Left ventricle myocardium inferior (tissue), 1 donor: ENCODE measurements at regions of chr21 and their contacts with region 1.

Region 1: DNA sequence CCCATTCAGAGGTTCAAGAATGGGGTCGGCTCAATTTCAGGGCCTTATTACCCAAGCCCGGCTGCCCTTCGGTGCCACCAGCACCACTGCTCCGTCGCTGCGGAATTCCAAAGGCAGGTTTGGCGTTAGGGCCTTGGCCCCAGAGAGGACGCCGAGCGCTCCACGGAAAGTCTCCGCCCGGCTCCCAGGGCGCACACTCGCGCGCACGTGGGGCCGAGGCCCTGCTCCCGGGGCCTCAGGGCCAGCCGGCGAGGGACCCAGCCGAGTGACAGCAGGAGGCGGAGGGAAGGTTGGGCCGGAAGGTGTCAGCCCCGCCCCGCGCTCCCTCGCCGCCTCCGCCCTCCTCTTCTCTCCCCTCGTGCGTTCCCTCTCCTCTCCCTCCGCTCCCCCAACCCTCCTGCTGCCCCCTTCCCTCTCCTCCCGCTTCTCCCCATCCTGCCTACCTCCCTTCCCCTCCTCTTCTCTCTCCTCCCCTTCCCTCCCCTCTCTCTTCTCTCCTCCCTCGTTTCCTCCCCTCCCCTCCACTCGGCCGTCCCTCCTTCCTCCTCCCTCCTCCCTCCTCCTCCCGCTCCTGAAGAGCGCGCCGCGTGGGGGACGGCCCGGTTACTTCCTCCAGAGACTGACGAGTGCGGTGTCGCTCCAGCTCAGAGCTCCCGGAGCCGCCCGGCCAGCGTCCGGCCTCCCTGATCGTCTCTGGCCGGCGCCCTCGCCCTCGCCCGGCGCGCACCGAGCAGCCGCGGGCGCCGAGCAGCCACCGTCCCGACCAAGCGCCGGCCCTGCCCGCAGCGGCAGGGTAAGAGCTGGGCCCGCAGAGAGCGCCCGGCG is at the start of gene ETS2:
- DNase-seq: peak; percentile 90
- H3K4me3 ChIP-seq: peak within 1 kb of the TSS; percentile 93
- H3K27ac ChIP-seq: peak within 1 kb of the TSS; percentile 94
- H3K4me1 ChIP-seq: peaks cover 54% of the 10 kb centered on the region
- H3K27me3 ChIP-seq: no peaks in the 10 kb centered on the region
- CTCF ChIP-seq: peak; percentile 11
- total RNA-seq, gene ETS2: 40.9 TPM

Region 2: DNA sequence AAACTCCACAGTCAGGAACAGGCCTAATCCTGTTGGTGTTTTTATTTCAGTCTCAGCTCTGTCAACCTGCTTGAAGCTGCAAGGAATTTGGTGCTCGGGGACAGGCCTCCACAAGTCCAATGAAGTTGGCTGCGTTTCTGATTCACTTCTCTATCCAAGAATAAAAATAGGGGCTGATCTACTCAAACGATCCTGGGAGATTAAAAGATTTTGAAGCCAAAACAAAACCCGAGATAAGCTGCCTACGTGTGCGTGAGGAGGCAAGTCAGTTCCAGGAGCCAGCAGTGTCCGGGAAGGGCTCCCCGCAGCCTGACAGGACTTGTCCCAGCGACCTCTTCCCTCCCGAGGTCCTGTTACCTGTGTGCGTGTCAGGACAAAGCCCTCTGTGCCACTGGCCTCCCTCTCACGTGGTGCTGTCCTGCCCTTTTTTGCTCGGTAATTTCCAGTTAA is 98.2 kb after region 1 on chr21:
- intact Hi-C with region 1: loop called (anchors 10 kb)
- DNase-seq: no peak
- H3K4me3 ChIP-seq: no peak overlapping the region
- H3K27ac ChIP-seq: peak overlapping the region; percentile 71
- H3K4me1 ChIP-seq: peaks cover 39% of the 10 kb centered on the region
- H3K27me3 ChIP-seq: no peaks in the 10 kb centered on the region
- CTCF ChIP-seq: no peak

Region 3: DNA sequence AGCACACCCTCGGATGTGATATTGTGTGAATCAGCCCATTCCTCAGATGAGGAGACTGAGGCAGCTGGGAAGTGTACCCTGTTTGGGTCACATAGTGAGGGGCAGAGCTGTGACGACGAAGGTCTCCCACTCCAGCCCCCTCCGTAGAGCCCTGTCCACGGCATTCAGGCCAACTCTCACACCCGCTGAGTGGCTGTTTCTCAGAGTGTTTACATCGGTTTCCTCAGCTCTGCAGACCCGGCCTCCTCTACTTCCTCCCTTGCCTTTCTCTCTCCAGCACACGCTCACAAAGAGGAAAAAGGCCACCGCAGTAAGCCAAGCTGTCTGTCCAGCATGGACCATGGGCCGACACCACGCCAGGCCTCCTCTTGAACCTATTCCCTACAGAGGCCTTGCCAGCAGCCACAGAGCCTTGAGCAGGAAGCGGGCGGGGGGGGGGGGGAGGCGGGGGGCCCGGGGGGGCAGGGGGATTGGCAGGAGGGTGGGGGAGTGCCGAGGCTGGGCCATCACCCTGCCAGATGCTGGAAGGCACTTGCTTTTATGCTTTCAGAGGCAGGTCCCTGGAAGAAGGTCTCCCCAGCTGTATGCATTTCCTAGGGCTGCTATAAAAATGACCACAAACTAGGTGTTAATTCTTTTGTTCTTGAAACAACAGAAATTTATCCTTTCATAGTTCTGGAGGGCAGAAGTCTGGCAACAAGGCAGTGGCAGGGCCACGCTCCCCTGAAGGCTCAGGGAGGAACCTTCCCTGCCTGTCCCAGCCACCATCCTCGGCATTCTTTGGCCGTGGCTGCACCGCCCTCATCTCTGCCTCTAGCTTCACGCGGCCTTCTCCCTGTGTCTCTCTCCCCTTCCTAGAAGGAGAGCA is 199.3 kb after region 1 on chr21:
- intact Hi-C with region 1: loop called (anchors 10 kb)
- DNase-seq: peak; percentile 64
- H3K4me3 ChIP-seq: no peak overlapping the region
- H3K27ac ChIP-seq: peak overlapping the region; percentile 90
- H3K4me1 ChIP-seq: peaks cover 85% of the 10 kb centered on the region
- H3K27me3 ChIP-seq: no peaks in the 10 kb centered on the region
- CTCF ChIP-seq: no peak

Region 4: GRCh38 chr21:39125752-39126485 is 320.4 kb after region 1 on chr21:
- intact Hi-C with region 1: loop called (anchors 10 kb)
- DNase-seq: no peak
- H3K4me3 ChIP-seq: no peak overlapping the region
- H3K27ac ChIP-seq: peak overlapping the region; percentile 63
- H3K4me1 ChIP-seq: peaks cover 22% of the 10 kb centered on the region
- H3K27me3 ChIP-seq: no peaks in the 10 kb centered on the region
- CTCF ChIP-seq: peak; percentile 76